ENCODE measurements at regions of chr6 and their contacts with region 1.

Region 1: GRCh38 chr6:89610149-89610642 is 28.4 kb downstream of the LYRM2 start:
- DNase-seq: peak; percentile 72 to 76 (median 74)
- ATAC-seq: peak; percentile 94
- H3K4me3 ChIP-seq: no peak overlapping the region
- H3K27ac ChIP-seq: no peak overlapping the region
- H3K4me1 ChIP-seq: no peaks in the 10 kb centered on the region
- H3K27me3 ChIP-seq: peaks cover 4 to 20% of the 10 kb centered on the region in 2 experiments; a peak in 4 of 5 replicates
- CTCF ChIP-seq: peak; percentile 69 to 91 (median 87)
- EP300 ChIP-seq: no peak
- POLR2A ChIP-seq: no peak
- RAD21 ChIP-seq: peak; percentile 71 to 80

Region 2: DNA sequence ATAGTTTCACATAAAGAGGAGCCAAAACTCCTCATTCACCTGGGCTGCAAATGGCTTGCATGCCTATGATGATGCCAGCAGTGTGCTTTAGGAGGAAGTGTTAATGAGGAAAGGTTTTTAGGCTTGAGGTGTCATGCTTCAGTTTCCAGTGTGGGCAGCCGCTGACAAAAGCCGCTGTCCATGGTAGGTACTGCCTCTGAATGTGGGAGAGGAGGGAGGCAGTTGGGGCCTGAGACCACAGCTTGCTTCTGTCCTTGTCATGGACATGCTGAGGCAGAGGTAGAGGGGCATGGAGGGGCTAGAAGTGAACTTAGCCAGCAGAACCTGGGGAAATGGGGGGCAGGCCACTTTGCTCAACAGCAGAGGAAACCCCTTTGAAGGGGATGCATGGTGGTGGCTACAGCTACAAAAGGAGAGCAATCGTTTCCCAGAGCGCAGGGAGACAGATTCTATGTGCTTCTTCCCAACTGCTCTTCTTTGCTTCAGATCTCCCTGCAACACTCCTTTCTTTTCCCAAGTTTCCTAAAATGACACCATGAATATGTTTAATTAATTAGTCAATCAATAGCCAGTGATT is 1072.0 kb before region 1 on chr6:
- CTCF ChIA-PET with region 1: no interaction called
- POLR2A ChIA-PET with region 1: no interaction called
- in situ Hi-C with region 1: no loop called
- intact Hi-C with region 1: no loop called
- DNase-seq: peak in 3 of 4 experiments; percentile 12 to 17 (median 13)
- ATAC-seq: peak; percentile 64; the same call in 2 of the 3 replicates
- H3K4me3 ChIP-seq: no peak overlapping the region
- H3K27ac ChIP-seq: no peak overlapping the region
- H3K4me1 ChIP-seq: no peaks in the 10 kb centered on the region
- H3K27me3 ChIP-seq: peaks cover 0 to 21% of the 10 kb centered on the region in 2 experiments; a peak in 4 of 5 replicates
- CTCF ChIP-seq: no peak
- EP300 ChIP-seq: no peak
- POLR2A ChIP-seq: no peak
- RAD21 ChIP-seq: no peak

Region 3: DNA sequence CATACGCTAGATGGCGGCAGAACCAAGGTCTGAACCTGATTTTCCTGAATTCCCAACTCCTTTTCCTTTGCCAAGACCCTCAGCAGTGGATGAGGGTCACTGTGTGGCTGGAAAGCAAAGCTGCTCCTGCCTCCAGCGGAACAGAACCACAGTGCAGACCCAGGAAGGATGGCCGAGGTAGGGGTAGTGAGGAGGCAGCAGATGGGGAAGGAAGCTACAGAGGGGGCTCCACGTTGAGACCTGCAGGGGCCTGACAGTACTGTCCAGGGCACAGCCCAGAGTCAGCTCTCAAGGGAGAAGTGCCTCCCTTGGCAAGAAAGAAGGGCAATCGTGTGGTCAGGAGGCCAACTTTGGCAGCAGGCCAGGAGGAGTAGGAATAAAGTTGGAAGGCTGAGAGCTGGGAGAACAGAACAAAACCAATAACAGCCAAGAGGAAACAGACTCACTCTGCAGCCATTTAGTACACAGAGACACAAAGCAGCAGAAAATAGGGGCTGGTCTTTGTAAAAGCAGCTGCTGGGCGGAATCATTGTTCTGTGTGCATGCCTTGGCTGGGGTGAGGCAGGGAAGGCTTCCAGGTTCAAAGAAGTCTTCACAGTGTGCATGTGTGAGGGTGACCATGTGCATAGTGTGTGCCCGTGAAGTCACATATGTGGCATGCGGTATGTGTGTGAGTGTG is 298.2 kb before region 1 on chr6:
- CTCF ChIA-PET with region 1: no interaction called
- POLR2A ChIA-PET with region 1: no interaction called
- in situ Hi-C with region 1: no loop called
- intact Hi-C with region 1: loop called (anchors 5 kb)
- DNase-seq: peak in 1 of 4 experiments; percentile 23
- ATAC-seq: peak; percentile 71
- H3K4me3 ChIP-seq: no peak overlapping the region
- H3K27ac ChIP-seq: no peak overlapping the region
- H3K4me1 ChIP-seq: peaks cover 0 to 2% of the 10 kb centered on the region in 2 experiments; a peak in 1 of 5 replicates
- H3K27me3 ChIP-seq: peaks cover 0 to 11% of the 10 kb centered on the region in 2 experiments; a peak in 1 of 5 replicates
- CTCF ChIP-seq: peak; percentile 46 to 79 (median 61)
- EP300 ChIP-seq: no peak
- POLR2A ChIP-seq: no peak
- RAD21 ChIP-seq: peak; percentile 47 to 69

Measured in K562 (cell line).